CD8-positive, alpha-beta T cell (primary cell): ENCODE measurements at regions of chr9 and their contacts with region 1.

Region 1: GRCh38 chr9:100598641-100599145 is 20.8 kb downstream of the CAVIN4 start:
- DNase-seq: peak; percentile 60 to 90 (median 79)
- ATAC-seq: peak; percentile 86
- H3K4me3 ChIP-seq: peak overlapping the region; percentile 54 to 59
- H3K4me3 Mint-ChIP-seq: peak overlapping the region; percentile 80
- H3K27ac ChIP-seq: peak overlapping the region in 1 of 2 experiments; percentile 49
- H3K27ac Mint-ChIP-seq: peak overlapping the region; percentile 73
- H3K4me1 ChIP-seq: peaks cover 7% of the 10 kb centered on the region
- H3K4me1 Mint-ChIP-seq: peaks cover 24% of the 10 kb centered on the region
- H3K27me3 ChIP-seq: no peaks in the 10 kb centered on the region
- H3K27me3 Mint-ChIP-seq: no peaks in the 10 kb centered on the region
- CTCF ChIP-seq: no peak

Region 2: GRCh38 chr9:99162759-99163364 is 1435.8 kb before region 1 on chr9:
- CTCF ChIA-PET with region 1: no interaction called
- POLR2A ChIA-PET with region 1: no interaction called
- intact Hi-C with region 1: loop called in 1 of 2 experiments (anchors 10 kb)
- DNase-seq: peak in 2 of 9 experiments; percentile 56 to 71
- ATAC-seq: no peak
- H3K4me3 ChIP-seq: no peak overlapping the region
- H3K4me3 Mint-ChIP-seq: no peak overlapping the region
- H3K27ac ChIP-seq: no peak overlapping the region
- H3K27ac Mint-ChIP-seq: no peak overlapping the region
- H3K4me1 ChIP-seq: peaks cover 14% of the 10 kb centered on the region
- H3K4me1 Mint-ChIP-seq: peaks cover 26% of the 10 kb centered on the region
- H3K27me3 ChIP-seq: no peaks in the 10 kb centered on the region
- H3K27me3 Mint-ChIP-seq: no peaks in the 10 kb centered on the region
- CTCF ChIP-seq: peak; percentile 86

Region 3: DNA sequence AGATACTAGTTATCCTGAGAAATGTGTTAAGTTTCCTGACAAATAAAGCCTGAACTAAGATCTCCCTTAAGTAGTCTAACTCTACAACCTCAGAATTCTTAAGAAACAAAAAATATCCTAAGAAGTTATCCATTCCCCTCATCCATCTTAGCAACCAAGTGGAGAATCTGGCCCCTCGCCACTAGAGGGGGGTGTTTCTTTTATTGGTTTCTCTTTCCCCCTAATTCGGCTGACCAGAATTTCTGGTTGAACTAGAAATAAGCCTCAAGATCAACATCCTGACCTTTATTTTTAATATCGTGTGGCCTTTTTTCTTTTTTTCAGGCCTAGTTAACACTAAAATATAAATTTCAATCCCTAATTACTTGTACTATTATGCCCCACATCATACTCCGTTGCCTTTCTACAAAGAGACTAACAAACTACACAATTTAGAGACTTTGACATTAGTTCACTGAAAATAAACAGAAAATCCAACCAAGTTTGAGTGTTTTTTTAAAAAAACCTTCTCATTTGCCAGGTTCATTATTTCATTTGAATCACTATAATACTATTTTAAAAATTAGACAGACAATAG is 791.3 kb before region 1 on chr9:
- CTCF ChIA-PET with region 1: interaction called, 3 read pairs
- POLR2A ChIA-PET with region 1: no interaction called
- intact Hi-C with region 1: loop called in 1 of 2 experiments (anchors 5 kb)
- DNase-seq: peak in 8 of 9 experiments; percentile 51 to 85 (median 74)
- ATAC-seq: peak; percentile 84
- H3K4me3 ChIP-seq: no peak overlapping the region
- H3K4me3 Mint-ChIP-seq: no peak overlapping the region
- H3K27ac ChIP-seq: no peak overlapping the region
- H3K27ac Mint-ChIP-seq: no peak overlapping the region
- H3K4me1 ChIP-seq: no peaks in the 10 kb centered on the region
- H3K4me1 Mint-ChIP-seq: peaks cover 13% of the 10 kb centered on the region
- H3K27me3 ChIP-seq: no peaks in the 10 kb centered on the region
- H3K27me3 Mint-ChIP-seq: peaks cover 4% of the 10 kb centered on the region
- CTCF ChIP-seq: peak; percentile 90

Region 4: GRCh38 chr9:100098887-100099721 is 499.6 kb before region 1 on chr9 and contains the starts of genes ERP44 and INVS:
- CTCF ChIA-PET with region 1: no interaction called
- POLR2A ChIA-PET with region 1: interaction called, 3 read pairs
- intact Hi-C with region 1: loop called in 1 of 2 experiments (anchors 5 kb)
- DNase-seq: peak; percentile 93 to 99 (median 96)
- ATAC-seq: peak; percentile 99
- H3K4me3 ChIP-seq: peak within 1 kb of the TSS; percentile 95 to 98
- H3K4me3 Mint-ChIP-seq: peak within 1 kb of the TSS; percentile 99
- H3K27ac ChIP-seq: peak within 1 kb of the TSS; percentile 72 to 85
- H3K27ac Mint-ChIP-seq: peak within 1 kb of the TSS; percentile 97
- H3K4me1 ChIP-seq: peaks cover 31% of the 10 kb centered on the region
- H3K4me1 Mint-ChIP-seq: peaks cover 44% of the 10 kb centered on the region
- H3K27me3 ChIP-seq: no peaks in the 10 kb centered on the region
- H3K27me3 Mint-ChIP-seq: no peaks in the 10 kb centered on the region
- CTCF ChIP-seq: no peak
- total RNA-seq, gene ERP44: 7.6 to 8.5 TPM
- total RNA-seq, gene INVS: 12.5 to 13.2 TPM

Region 5: DNA sequence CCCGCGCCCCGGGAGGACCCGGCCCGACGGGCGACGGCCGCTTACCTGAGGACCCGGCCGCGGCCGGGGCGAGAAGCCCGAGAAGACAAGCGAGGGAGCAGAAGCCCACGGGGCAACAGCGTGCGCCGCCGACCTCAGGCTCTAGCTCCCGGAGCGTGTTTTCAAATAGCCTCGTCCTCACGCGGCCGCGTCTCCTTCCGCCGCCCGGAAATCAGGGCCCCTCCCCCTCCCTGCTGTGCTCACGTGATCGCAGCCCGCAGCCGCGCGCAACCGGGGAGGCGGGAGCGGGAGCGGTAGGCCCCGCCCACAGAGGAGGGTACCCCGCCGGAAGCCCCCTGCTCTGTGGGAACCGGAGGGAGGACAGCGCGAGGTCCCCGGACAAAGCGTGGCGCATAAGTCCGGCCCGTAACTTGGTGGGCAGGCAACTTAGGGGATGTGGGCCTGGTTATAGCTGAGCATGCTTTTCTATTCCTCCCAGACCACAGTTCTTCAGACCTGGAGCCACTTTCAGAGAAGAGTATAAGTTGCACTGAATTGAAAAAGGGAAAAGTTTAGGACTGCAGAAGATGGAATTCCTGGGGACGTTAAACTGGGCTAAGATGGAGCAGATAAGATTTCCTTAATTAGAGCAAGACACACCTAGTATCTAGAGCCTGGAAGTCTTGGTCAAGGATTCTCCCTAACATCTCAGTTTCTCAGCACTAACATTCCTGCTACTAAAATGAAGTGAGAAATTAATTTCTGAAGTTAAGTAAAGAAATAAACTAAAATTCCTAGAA is 245.8 kb before region 1 on chr9 and contains the start of gene TEX10:
- CTCF ChIA-PET with region 1: no interaction called
- POLR2A ChIA-PET with region 1: no interaction called
- intact Hi-C with region 1: loop called (anchors 2 to 5 kb)
- DNase-seq: peak; percentile 72 to 93 (median 88)
- ATAC-seq: peak; percentile 89
- H3K4me3 ChIP-seq: peak within 1 kb of the TSS; percentile 90 to 92
- H3K4me3 Mint-ChIP-seq: peak within 1 kb of the TSS; percentile 94
- H3K27ac ChIP-seq: peak within 1 kb of the TSS; percentile 68
- H3K27ac Mint-ChIP-seq: peak within 1 kb of the TSS; percentile 91
- H3K4me1 ChIP-seq: peaks cover 32% of the 10 kb centered on the region
- H3K4me1 Mint-ChIP-seq: peaks cover 60% of the 10 kb centered on the region
- H3K27me3 ChIP-seq: no peaks in the 10 kb centered on the region
- H3K27me3 Mint-ChIP-seq: no peaks in the 10 kb centered on the region
- CTCF ChIP-seq: no peak
- total RNA-seq, gene TEX10: 9.5 to 9.8 TPM

Region 6: DNA sequence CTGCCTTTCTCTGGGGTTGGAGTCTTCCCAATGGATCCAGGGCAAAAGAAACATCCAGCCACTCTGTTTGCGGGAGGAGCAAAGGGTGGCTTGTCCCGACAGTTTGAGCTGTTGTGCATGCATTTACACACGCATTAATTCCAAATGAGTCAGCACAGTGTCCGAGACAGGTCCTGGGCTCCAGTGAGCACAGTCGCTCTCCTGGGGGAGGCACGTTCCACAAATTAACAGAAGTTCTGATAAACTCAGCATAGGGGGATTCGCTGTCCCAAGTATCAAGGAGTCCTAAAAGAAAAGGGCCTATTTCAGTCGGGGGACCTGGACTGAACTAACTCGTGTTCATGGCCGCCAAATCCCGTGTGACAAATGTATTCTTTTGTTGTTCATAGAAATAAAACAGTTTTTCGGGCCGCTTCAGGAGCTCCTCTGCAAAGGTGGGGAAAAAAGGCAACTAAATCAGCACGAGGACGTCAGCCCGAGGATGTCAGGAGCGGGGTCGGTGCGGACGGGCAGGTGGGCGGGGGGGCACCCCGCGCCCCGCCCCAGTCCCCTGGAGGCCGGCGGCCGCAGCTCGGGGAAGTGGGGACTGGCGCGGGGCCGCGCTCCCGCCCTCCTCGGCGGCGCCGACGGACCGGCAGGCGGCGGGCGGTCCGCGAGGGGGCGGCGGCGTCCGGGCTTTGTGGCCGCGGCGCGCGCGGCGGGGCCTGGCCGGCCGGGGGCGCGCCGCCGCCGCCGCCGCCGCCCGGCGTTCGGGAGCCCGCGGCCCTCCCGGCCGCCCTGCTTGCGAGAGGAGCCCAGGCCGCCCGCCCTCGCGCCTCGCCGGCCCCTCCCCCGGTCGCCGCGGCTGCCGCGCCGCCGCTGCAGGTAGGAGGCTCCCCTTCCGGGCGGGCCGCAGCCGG is 171.9 kb before region 1 on chr9 and contains the start of gene MSANTD3:
- CTCF ChIA-PET with region 1: no interaction called
- POLR2A ChIA-PET with region 1: no interaction called
- intact Hi-C with region 1: loop called in 1 of 2 experiments (anchors 2 kb)
- DNase-seq: peak; percentile 20 to 78 (median 58)
- ATAC-seq: peak; percentile 84
- H3K4me3 ChIP-seq: peak within 1 kb of the TSS; percentile 69 to 74
- H3K4me3 Mint-ChIP-seq: peak within 1 kb of the TSS; percentile 97
- H3K27ac ChIP-seq: peak within 1 kb of the TSS; percentile 31 to 35
- H3K27ac Mint-ChIP-seq: peak within 1 kb of the TSS; percentile 95
- H3K4me1 ChIP-seq: peaks cover 18% of the 10 kb centered on the region
- H3K4me1 Mint-ChIP-seq: peaks cover 35% of the 10 kb centered on the region
- H3K27me3 ChIP-seq: no peaks in the 10 kb centered on the region
- H3K27me3 Mint-ChIP-seq: peaks cover 4% of the 10 kb centered on the region
- CTCF ChIP-seq: no peak
- total RNA-seq, gene MSANTD3: 10.2 to 10.8 TPM

Region 7: GRCh38 chr9:100652850-100653249 is 54.2 kb after region 1 on chr9:
- CTCF ChIA-PET with region 1: no interaction called
- POLR2A ChIA-PET with region 1: no interaction called
- intact Hi-C with region 1: no loop called
- DNase-seq: no peak
- ATAC-seq: no peak
- H3K4me3 ChIP-seq: no peak overlapping the region
- H3K4me3 Mint-ChIP-seq: no peak overlapping the region
- H3K27ac ChIP-seq: no peak overlapping the region
- H3K27ac Mint-ChIP-seq: no peak overlapping the region
- H3K4me1 ChIP-seq: no peaks in the 10 kb centered on the region
- H3K4me1 Mint-ChIP-seq: no peaks in the 10 kb centered on the region
- H3K27me3 ChIP-seq: no peaks in the 10 kb centered on the region
- H3K27me3 Mint-ChIP-seq: peaks cover 9% of the 10 kb centered on the region
- CTCF ChIP-seq: no peak

Region 8: GRCh38 chr9:101398068-101398929 is 799.6 kb after region 1 on chr9 and contains the starts of genes MRPL50 and ZNF189:
- CTCF ChIA-PET with region 1: no interaction called
- POLR2A ChIA-PET with region 1: no interaction called
- intact Hi-C with region 1: loop called in 1 of 2 experiments (anchors 10 kb)
- DNase-seq: peak; percentile 89 to 99 (median 95)
- ATAC-seq: peak; percentile 93
- H3K4me3 ChIP-seq: peak within 1 kb of the TSS; percentile 87 to 91
- H3K4me3 Mint-ChIP-seq: peak within 1 kb of the TSS; percentile 97
- H3K27ac ChIP-seq: peak within 1 kb of the TSS; percentile 96 to 98
- H3K27ac Mint-ChIP-seq: peak within 1 kb of the TSS; percentile 99
- H3K4me1 ChIP-seq: peaks cover 54% of the 10 kb centered on the region
- H3K4me1 Mint-ChIP-seq: peaks cover 80% of the 10 kb centered on the region
- H3K27me3 ChIP-seq: no peaks in the 10 kb centered on the region
- H3K27me3 Mint-ChIP-seq: no peaks in the 10 kb centered on the region
- CTCF ChIP-seq: no peak
- total RNA-seq, gene MRPL50: 7.5 to 8.4 TPM
- total RNA-seq, gene ZNF189: 4.0 to 5.2 TPM